ENCODE measurements at regions of chr1 and their contacts with region 1.

Region 1: DNA sequence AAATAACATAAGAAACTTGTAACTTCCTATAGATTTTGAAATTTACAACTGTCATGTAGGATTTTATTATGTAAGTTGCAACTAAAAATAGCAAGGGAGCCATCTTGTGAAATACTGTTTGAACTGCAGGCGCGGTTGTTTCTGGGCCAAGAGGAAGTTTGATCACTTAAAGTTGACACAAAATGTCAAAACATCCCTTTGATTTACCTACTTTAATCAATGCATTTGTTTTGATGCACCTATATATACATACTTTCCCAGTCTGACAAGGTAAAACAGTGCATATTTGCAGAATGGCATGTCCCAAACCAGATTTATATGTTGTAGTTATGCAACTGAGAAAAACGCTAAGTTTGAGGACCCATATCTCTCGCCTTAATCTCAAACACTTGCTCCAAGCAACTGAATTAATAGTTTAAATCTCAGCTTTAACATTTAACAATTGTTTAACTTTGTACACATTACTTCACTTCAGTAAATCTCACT is 63.8 kb downstream of the KCNK2 start:
- DNase-seq: peak; percentile 77
- H3K4me3 Mint-ChIP-seq: no peak overlapping the region
- H3K27ac Mint-ChIP-seq: no peak overlapping the region
- H3K4me1 Mint-ChIP-seq: no peaks in the 10 kb centered on the region
- H3K27me3 Mint-ChIP-seq: no peaks in the 10 kb centered on the region
- CTCF ChIP-seq: peak; percentile 98

Region 2: DNA sequence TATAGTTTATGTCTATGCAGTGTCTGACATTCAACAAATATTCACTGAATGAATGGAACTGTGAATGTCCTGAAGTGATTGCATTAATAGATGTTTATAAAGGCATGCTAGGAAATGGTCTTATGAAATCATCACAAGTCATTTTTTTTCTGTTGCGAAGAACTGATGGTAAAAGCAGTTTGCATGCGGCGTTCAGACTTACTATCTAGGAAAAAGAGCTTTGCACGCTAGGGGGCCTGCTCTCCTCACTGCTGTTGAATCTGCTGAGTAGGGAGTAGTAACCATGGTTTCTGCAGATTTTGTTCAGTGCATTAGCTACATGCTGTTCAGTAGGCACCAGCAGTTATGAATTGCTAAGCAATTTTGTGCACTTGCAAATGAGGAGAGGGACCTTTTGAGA is 485.5 kb before region 1 on chr1:
- CTCF ChIA-PET with region 1: interaction called, 208 read pairs
- POLR2A ChIA-PET with region 1: interaction called, 9 read pairs
- intact Hi-C with region 1: loop called (anchors 1 kb)
- DNase-seq: peak; percentile 42
- H3K4me3 Mint-ChIP-seq: no peak overlapping the region
- H3K27ac Mint-ChIP-seq: no peak overlapping the region
- H3K4me1 Mint-ChIP-seq: peaks cover 13% of the 10 kb centered on the region
- H3K27me3 Mint-ChIP-seq: no peaks in the 10 kb centered on the region
- CTCF ChIP-seq: peak; percentile 82

Region 3: DNA sequence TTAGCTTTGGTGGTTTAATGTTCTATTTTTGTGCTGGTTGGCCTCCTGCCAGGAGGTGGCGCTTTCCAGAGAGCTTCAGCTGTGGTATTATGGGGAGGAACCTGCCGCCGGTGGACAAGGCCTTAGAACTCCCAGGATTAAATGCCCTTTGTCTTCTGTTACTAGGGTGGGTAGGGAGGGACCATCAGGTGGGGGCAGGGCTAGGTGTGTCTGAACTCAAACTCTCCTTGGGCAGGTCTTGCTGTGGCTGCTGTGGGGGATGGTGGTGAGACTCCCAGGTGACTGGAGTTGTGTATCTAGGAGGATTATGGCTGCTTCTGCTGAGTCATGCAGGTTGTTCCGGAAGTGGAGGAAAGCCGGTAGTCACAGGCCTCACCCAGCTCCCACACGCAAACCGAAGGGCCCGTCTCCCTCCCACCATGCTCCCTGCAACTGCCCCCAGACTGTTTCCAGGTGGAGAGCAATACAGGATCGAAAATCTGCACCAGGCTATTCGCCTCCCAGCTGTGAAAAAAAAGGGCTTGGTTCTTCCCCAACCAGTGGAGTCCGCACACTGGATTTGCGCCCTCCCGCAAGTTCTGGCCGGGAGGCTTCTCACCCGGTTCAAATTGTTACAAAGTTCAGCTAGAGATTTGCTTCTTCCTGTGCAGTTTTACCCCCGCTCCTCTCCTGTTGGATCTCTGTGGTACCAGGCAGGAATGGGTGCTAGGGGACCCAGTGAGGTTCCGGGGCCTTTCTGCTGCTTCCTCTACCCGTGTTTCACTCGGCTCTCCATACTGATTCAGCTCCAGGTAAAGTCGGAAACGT is 322.9 kb before region 1 on chr1:
- CTCF ChIA-PET with region 1: interaction called, 11 read pairs
- POLR2A ChIA-PET with region 1: no interaction called
- intact Hi-C with region 1: no loop called
- DNase-seq: peak; percentile 14
- H3K4me3 Mint-ChIP-seq: no peak overlapping the region
- H3K27ac Mint-ChIP-seq: no peak overlapping the region
- H3K4me1 Mint-ChIP-seq: no peaks in the 10 kb centered on the region
- H3K27me3 Mint-ChIP-seq: no peaks in the 10 kb centered on the region
- CTCF ChIP-seq: no peak

Region 4: DNA sequence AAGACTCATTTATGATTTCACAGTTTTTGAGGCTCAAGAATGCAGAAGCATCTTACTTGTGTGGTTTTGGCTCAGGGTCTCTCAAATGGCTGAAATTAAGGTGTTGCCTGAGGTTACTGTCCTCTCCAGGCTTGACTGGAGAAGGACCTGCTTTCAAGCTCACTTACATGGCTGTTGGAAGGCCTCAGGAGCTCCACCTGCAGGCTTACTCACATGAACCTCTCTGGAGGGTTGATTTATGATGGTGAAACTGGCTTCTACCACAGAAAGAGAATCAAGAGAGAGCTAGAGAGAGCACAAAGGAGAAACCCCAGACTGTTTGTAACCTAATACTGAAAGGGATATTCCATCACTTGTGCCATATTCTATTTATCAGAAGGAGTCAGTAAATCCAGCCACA is 70.1 kb before region 1 on chr1:
- CTCF ChIA-PET with region 1: interaction called, 12 read pairs
- POLR2A ChIA-PET with region 1: no interaction called
- intact Hi-C with region 1: loop called (anchors 2 kb)
- DNase-seq: peak; percentile 83
- H3K4me3 Mint-ChIP-seq: no peak overlapping the region
- H3K27ac Mint-ChIP-seq: peak overlapping the region; percentile 10
- H3K4me1 Mint-ChIP-seq: peaks cover 4% of the 10 kb centered on the region
- H3K27me3 Mint-ChIP-seq: no peaks in the 10 kb centered on the region
- CTCF ChIP-seq: peak; percentile 55

Region 5: GRCh38 chr1:215181518-215181917 is 35.1 kb after region 1 on chr1:
- CTCF ChIA-PET with region 1: interaction called, 12 read pairs
- POLR2A ChIA-PET with region 1: no interaction called
- intact Hi-C with region 1: no loop called
- DNase-seq: peak; percentile 43
- H3K4me3 Mint-ChIP-seq: no peak overlapping the region
- H3K27ac Mint-ChIP-seq: no peak overlapping the region
- H3K4me1 Mint-ChIP-seq: peaks cover 8% of the 10 kb centered on the region
- H3K27me3 Mint-ChIP-seq: no peaks in the 10 kb centered on the region
- CTCF ChIP-seq: no peak

Region 6: DNA sequence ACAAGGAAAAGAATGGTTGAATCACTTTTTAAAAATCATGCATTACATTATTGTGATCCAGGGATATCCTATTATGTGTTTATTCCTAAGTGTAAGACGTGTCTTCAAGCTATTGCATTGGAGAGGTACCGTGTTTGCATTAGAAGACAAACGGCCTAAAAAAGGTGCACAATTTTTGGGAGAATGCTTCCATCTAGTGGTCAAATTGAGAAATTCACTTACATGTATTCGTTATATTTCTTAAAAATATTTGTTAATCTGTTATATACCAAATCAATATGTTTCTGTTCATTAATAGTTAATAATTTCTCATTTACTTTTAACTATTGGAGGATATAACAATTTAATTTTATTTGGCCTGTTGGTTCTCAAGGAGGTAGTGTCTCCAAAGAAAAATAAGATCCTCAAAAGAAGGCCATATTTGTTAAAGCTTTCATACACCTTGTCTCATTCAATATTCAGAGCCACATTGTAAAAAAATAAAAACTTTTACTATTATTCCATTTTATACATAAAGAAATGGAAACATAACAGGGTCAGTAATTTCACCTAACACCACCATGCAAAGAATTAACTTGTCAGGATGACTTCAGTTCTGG is 380.3 kb after region 1 on chr1:
- CTCF ChIA-PET with region 1: interaction called, 83 read pairs
- POLR2A ChIA-PET with region 1: interaction called, 3 read pairs
- intact Hi-C with region 1: loop called (anchors 1 kb)
- DNase-seq: peak; percentile 80
- H3K4me3 Mint-ChIP-seq: no peak overlapping the region
- H3K27ac Mint-ChIP-seq: no peak overlapping the region
- H3K4me1 Mint-ChIP-seq: peaks cover 12% of the 10 kb centered on the region
- H3K27me3 Mint-ChIP-seq: no peaks in the 10 kb centered on the region
- CTCF ChIP-seq: peak; percentile 86